ENCODE measurements at regions of chr4 and their contacts with region 1.

Region 1: GRCh38 chr4:1693129-1693896 is 9.2 kb upstream of the FAM53A start:
- DNase-seq: peak; percentile 74
- ATAC-seq: peak; percentile 84
- H3K4me3 ChIP-seq: no peak overlapping the region
- H3K27ac ChIP-seq: no peak overlapping the region
- H3K4me1 ChIP-seq: no peaks in the 10 kb centered on the region
- H3K27me3 ChIP-seq: no peaks in the 10 kb centered on the region
- CTCF ChIP-seq: peak; percentile 90

Region 2: GRCh38 chr4:1726146-1726934 is 33.0 kb after region 1 on chr4:
- CTCF ChIA-PET with region 1: interaction called, 20 read pairs
- POLR2A ChIA-PET with region 1: no interaction called
- intact Hi-C with region 1: no loop called
- DNase-seq: peak; percentile 87
- ATAC-seq: peak; percentile 45
- H3K4me3 ChIP-seq: no peak overlapping the region
- H3K27ac ChIP-seq: peak overlapping the region; percentile 92
- H3K4me1 ChIP-seq: peaks cover 55% of the 10 kb centered on the region
- H3K27me3 ChIP-seq: no peaks in the 10 kb centered on the region
- CTCF ChIP-seq: peak; percentile 93